GM13976 (cell line): ENCODE measurements at regions of chr15 and their contacts with region 1.

Region 1: GRCh38 chr15:56821721-56822425 is 88.6 kb upstream of the ZNF280D start:
- DNase-seq: peak; percentile 41
- CTCF ChIP-seq: peak; percentile 40

Region 2: DNA sequence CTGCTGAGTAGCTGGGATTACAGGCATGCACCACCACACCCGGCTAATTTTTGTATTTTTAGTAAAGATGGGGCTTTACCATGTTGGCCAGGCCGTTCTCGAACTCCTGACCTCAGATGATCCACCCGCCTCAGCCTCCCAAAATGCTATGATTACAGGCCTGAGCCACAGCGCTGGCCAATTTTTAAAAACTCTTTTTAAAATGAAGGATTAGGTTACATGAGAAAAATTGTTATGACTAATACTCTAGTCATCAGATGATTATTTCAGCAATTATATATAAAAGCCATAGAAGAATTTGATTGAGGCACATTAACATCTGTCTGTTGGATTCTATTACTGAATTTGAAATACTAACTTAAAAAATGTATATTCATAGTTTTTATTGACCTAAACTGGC is 222.9 kb before region 1 on chr15:
- in situ Hi-C with region 1: no loop called
- DNase-seq: no peak
- CTCF ChIP-seq: no peak

Region 3: DNA sequence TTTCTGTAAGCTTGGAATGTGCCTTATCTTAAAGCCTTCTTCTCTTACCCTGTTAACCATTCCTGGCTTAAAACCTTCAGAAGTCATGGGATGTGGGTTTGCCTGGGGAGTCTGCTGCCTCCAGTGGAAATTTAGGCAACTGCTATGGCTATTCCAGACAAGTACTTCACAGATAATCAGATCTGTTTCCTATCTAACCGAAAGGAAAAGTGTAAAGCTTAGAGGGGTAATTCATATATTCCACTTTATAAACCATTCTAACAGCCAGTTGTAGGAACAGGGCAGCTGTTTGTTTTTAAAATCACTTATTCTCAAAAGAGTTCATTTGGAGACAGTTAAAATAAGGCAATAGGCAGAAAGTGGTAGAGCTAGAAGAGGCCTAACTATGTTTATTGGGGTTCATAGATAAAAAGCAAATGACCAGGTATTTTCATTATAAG is 316.5 kb after region 1 on chr15:
- in situ Hi-C with region 1: loop called (anchors 10 kb)
- DNase-seq: no peak
- CTCF ChIP-seq: no peak